H1 (cell line): ENCODE measurements at regions of chr3 and their contacts with region 1.

Region 1: GRCh38 chr3:138923531-138923994 is 23.4 kb downstream of the FOXL2 start:
- DNase-seq: peak in 1 of 2 experiments; percentile 96
- H3K4me3 ChIP-seq: no peak overlapping the region
- H3K27ac ChIP-seq: no peak overlapping the region
- H3K4me1 ChIP-seq: no peaks in the 10 kb centered on the region; a peak in 1 of 7 replicates
- H3K27me3 ChIP-seq: no peaks in the 10 kb centered on the region; a peak in 1 of 7 replicates
- CTCF ChIP-seq: peak; percentile 82 to 96 (median 86)
- EP300 ChIP-seq: no peak
- POLR2A ChIP-seq: no peak
- RAD21 ChIP-seq: peak; percentile 90 to 91

Region 2: DNA sequence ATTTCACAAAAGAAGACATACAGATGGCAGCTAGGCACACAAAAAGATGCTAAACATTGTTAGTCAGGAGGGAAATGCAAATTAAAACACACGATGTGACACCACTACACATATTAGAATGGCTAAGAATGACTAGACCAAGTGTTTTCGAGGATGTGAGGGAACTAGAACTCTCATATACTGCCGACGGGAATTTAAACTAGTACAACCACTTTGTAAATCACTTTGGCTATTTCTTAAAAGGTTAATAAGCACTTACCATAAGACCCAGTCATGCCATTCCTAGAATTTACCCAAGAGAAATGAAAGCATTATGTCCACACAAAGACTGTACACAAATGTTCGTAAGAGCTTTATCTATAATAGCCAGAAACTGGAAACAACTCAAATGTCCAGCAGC is 335.1 kb before region 1 on chr3:
- CTCF ChIA-PET with region 1: interaction called, 80 read pairs
- POLR2A ChIA-PET with region 1: no interaction called
- DNase-seq: no peak
- H3K4me3 ChIP-seq: no peak overlapping the region
- H3K27ac ChIP-seq: no peak overlapping the region
- H3K4me1 ChIP-seq: peaks cover 0 to 3% (median 0%) of the 10 kb centered on the region in 4 experiments; a peak in 1 of 7 replicates
- H3K27me3 ChIP-seq: no peaks in the 10 kb centered on the region
- CTCF ChIP-seq: no peak
- EP300 ChIP-seq: no peak
- POLR2A ChIP-seq: no peak
- RAD21 ChIP-seq: no peak

Region 3: GRCh38 chr3:138625707-138626365 is 297.7 kb before region 1 on chr3:
- CTCF ChIA-PET with region 1: interaction called, 14 read pairs
- POLR2A ChIA-PET with region 1: no interaction called
- DNase-seq: no peak
- H3K4me3 ChIP-seq: no peak overlapping the region
- H3K27ac ChIP-seq: no peak overlapping the region
- H3K4me1 ChIP-seq: no peaks in the 10 kb centered on the region
- H3K27me3 ChIP-seq: no peaks in the 10 kb centered on the region
- CTCF ChIP-seq: no peak
- EP300 ChIP-seq: no peak
- POLR2A ChIP-seq: no peak
- RAD21 ChIP-seq: no peak

Region 4: DNA sequence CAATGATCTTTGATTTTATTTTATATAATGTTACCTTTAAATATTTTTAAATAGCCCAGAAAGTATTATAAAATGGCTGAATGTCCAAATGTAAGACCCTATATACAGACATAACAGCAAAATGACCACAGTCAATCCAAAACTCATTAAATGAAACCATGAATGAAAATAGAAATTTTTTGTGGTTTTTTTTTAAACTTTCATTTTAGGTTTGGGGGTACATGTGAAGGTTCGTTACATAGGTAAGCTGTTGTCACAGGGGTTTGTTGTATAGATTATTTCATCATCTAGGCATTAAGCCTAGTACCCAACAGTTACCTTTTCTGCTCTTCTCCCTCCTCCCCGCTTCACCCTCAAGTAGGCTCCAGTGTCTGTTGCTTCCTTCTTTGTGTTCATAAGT is 206.2 kb before region 1 on chr3:
- CTCF ChIA-PET with region 1: interaction called, 10 read pairs
- POLR2A ChIA-PET with region 1: no interaction called
- DNase-seq: no peak
- H3K4me3 ChIP-seq: no peak overlapping the region
- H3K27ac ChIP-seq: no peak overlapping the region
- H3K4me1 ChIP-seq: no peaks in the 10 kb centered on the region
- H3K27me3 ChIP-seq: no peaks in the 10 kb centered on the region
- CTCF ChIP-seq: no peak
- EP300 ChIP-seq: no peak
- POLR2A ChIP-seq: no peak
- RAD21 ChIP-seq: no peak

Region 5: DNA sequence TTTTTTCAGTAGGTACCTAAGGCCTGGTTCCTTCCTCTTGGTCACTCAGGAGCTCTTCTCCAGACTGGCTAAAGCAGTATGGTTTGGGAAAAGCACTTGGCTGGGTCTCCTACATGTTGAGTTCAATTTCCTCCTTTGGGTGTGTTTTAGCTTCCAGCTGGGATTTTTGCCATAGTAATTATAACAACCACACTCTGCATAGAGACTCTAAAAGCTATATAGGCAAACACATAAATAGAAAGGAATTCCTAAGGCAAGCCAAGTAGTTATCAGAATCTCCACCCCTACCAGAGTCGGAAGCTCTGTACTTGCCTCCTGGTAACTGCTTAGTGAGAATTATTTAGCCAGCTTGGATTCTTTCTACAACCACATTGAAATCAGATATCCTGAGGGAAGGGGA is 25.3 kb before region 1 on chr3:
- CTCF ChIA-PET with region 1: interaction called, 22 read pairs
- POLR2A ChIA-PET with region 1: interaction called, 3 read pairs
- DNase-seq: no peak
- H3K4me3 ChIP-seq: no peak overlapping the region
- H3K27ac ChIP-seq: no peak overlapping the region
- H3K4me1 ChIP-seq: no peaks in the 10 kb centered on the region; a peak in 1 of 7 replicates
- H3K27me3 ChIP-seq: no peaks in the 10 kb centered on the region
- CTCF ChIP-seq: no peak
- EP300 ChIP-seq: no peak
- POLR2A ChIP-seq: no peak
- RAD21 ChIP-seq: no peak

Region 6: GRCh38 chr3:138946181-138947059 is 22.9 kb after region 1 on chr3:
- CTCF ChIA-PET with region 1: interaction called, 10 read pairs
- POLR2A ChIA-PET with region 1: no interaction called
- DNase-seq: peak in 1 of 2 experiments; percentile 79
- H3K4me3 ChIP-seq: peak overlapping the region; percentile 37 to 67 (median 46)
- H3K27ac ChIP-seq: no peak overlapping the region
- H3K4me1 ChIP-seq: peaks cover 7 to 50% (median 21%) of the 10 kb centered on the region in 4 experiments
- H3K27me3 ChIP-seq: peaks cover 83 to 100% (median 96%) of the 10 kb centered on the region in 4 experiments
- CTCF ChIP-seq: peak in 2 of 3 experiments; percentile 41 to 48; a peak in 3 of 4 replicates
- EP300 ChIP-seq: no peak
- POLR2A ChIP-seq: peak in 1 of 2 experiments; percentile 14; a peak in 1 of 3 replicates
- RAD21 ChIP-seq: no peak